CD8-positive, alpha-beta T cell (primary cell): ENCODE measurements at regions of chr16 and their contacts with region 1.

Region 1: DNA sequence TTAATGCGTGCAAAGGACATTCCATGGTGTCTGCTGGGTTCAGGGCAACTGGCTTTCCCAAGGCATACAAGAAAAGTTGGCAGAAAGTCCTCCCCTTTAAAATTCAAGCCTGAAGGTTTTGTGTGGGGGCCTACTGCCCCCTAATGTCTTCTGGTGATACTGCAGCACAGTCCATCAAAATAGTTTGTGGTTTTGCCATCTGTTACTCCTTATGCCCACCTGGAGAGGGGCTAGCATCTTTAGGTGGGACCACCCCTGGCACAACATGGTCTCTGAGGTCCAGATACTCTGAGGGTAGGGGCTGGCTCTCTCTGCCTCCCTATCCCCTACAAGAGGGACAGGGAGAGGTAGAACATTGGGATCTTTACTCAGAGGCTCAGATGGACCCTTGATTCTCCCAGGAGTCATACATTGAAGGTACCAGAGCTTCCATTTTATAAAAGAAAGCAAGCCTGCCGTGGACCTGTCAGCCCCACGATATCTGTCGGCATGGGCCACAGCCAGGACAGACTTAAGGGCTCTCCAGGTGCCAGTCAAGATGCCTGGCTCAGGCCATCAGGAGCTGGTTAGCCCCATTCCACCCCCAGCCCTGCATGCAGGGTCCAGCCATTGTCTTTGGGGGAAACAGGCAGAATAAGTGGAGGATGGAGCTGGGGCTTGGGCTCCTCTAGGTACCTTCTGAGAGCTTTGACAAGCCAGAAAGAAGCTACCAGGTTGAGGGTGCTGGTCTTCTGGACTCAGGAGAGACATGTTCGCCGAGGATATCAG is 6.3 kb downstream of the ESRP2 start:
- DNase-seq: peak in 6 of 9 experiments; percentile 36 to 72 (median 56)
- ATAC-seq: peak; percentile 64
- H3K4me3 ChIP-seq: no peak overlapping the region
- H3K4me3 Mint-ChIP-seq: no peak overlapping the region
- H3K27ac ChIP-seq: no peak overlapping the region
- H3K27ac Mint-ChIP-seq: peak overlapping the region; percentile 53
- H3K4me1 ChIP-seq: peaks cover 20% of the 10 kb centered on the region
- H3K4me1 Mint-ChIP-seq: peaks cover 41% of the 10 kb centered on the region
- H3K27me3 ChIP-seq: no peaks in the 10 kb centered on the region
- H3K27me3 Mint-ChIP-seq: no peaks in the 10 kb centered on the region
- CTCF ChIP-seq: peak; percentile 81

Region 2: DNA sequence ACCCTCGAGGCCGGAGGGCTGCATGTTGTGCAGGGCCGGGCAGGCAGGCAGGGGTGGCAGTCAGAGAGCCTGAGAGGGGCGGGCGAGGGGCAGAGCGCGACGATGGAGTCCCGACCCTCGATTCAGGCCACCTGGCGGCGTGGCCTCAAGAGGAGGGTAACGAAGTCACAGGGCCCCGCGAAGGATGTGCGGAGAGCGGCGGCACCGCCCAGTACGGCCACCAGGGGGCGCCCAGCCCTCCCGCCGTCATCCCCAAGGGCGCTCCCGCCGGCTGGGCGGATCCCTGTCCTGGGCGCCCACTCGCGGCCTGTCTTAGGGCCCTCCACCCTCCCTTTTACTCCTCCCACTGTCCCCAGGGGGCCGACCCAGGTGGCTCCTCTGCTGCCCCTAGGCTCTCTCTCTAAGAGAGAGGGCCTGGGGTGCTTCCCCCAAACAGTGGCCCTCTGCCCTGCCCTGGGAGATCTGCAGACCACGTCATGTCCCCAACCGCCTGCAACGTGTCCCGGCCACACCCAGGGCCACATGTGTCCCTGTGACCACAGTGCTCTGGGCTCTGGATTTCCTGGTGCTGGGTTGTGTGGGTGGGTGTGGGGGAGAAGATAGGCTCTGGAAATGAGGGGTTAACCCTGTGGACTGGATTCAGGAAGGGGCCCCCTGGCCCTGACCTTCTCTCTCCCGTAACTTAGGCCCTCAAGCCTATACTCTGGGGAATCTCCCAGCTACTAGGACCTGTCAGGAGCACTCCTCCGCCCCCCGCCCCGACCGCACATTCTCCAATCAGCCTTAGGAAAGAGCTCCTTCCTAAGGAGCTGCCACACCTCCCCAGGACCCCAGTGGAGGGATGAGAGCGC is 236.2 kb before region 1 on chr16:
- CTCF ChIA-PET with region 1: interaction called, 5 read pairs
- POLR2A ChIA-PET with region 1: no interaction called
- intact Hi-C with region 1: loop called (anchors 1 to 2 kb)
- DNase-seq: peak; percentile 70 to 91 (median 79)
- ATAC-seq: peak; percentile 92
- H3K4me3 ChIP-seq: peak overlapping the region; percentile 38 to 41
- H3K4me3 Mint-ChIP-seq: peak overlapping the region; percentile 83
- H3K27ac ChIP-seq: peak overlapping the region; percentile 52 to 87
- H3K27ac Mint-ChIP-seq: peak overlapping the region; percentile 95
- H3K4me1 ChIP-seq: peaks cover 34% of the 10 kb centered on the region
- H3K4me1 Mint-ChIP-seq: peaks cover 34% of the 10 kb centered on the region
- H3K27me3 ChIP-seq: no peaks in the 10 kb centered on the region
- H3K27me3 Mint-ChIP-seq: no peaks in the 10 kb centered on the region
- CTCF ChIP-seq: peak; percentile 87

Region 3: GRCh38 chr16:68074850-68075555 is 154.6 kb before region 1 on chr16:
- CTCF ChIA-PET with region 1: interaction called, 9 read pairs
- POLR2A ChIA-PET with region 1: no interaction called
- intact Hi-C with region 1: loop called in 1 of 2 experiments (anchors 1 kb)
- DNase-seq: peak in 8 of 9 experiments; percentile 58 to 85 (median 77)
- ATAC-seq: peak; percentile 69
- H3K4me3 ChIP-seq: peak overlapping the region; percentile 1 to 19
- H3K4me3 Mint-ChIP-seq: peak overlapping the region; percentile 76
- H3K27ac ChIP-seq: peak overlapping the region in 1 of 2 experiments; percentile 64
- H3K27ac Mint-ChIP-seq: peak overlapping the region; percentile 92
- H3K4me1 ChIP-seq: peaks cover 92% of the 10 kb centered on the region
- H3K4me1 Mint-ChIP-seq: peaks cover 87% of the 10 kb centered on the region
- H3K27me3 ChIP-seq: no peaks in the 10 kb centered on the region
- H3K27me3 Mint-ChIP-seq: no peaks in the 10 kb centered on the region
- CTCF ChIP-seq: no peak

Region 4: DNA sequence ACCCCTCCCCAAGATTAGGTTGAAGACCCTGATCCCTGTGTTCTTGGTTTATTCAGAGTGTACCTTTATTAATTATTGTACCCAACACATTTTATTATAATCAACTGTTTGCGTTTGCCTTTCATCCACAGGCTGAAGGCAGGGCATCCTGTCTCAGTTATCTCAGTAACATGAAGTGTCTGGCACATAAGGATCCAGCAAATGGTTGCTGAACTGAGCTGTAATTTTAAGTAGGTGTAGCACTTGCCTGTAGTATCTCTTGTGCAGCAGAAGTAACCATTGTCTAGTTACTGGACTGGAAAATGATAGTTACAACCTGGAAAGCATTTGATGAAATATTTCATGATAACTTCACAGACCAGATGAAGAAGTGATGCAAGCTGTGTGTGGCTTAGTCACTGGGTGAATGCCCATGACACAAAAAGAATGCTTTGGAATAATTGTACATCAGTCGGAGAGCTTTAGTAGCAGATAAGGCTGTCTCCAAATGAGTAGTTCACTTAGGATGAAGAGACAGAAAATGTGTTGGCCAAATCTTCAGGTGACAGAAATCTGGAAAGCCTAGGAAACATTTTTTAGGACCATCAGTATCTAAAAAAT is 50.3 kb before region 1 on chr16:
- CTCF ChIA-PET with region 1: interaction called, 3 read pairs
- POLR2A ChIA-PET with region 1: no interaction called
- intact Hi-C with region 1: loop called (anchors 5 to 10 kb)
- DNase-seq: no peak
- ATAC-seq: no peak
- H3K4me3 ChIP-seq: no peak overlapping the region
- H3K4me3 Mint-ChIP-seq: no peak overlapping the region
- H3K27ac ChIP-seq: no peak overlapping the region
- H3K27ac Mint-ChIP-seq: peak overlapping the region; percentile 73
- H3K4me1 ChIP-seq: no peaks in the 10 kb centered on the region
- H3K4me1 Mint-ChIP-seq: peaks cover 11% of the 10 kb centered on the region
- H3K27me3 ChIP-seq: no peaks in the 10 kb centered on the region
- H3K27me3 Mint-ChIP-seq: no peaks in the 10 kb centered on the region
- CTCF ChIP-seq: no peak

Region 5: GRCh38 chr16:68190736-68191510 is 38.7 kb before region 1 on chr16:
- CTCF ChIA-PET with region 1: no interaction called
- POLR2A ChIA-PET with region 1: no interaction called
- intact Hi-C with region 1: loop called in 1 of 2 experiments (anchors 5 kb)
- DNase-seq: no peak
- ATAC-seq: no peak
- H3K4me3 ChIP-seq: no peak overlapping the region
- H3K4me3 Mint-ChIP-seq: no peak overlapping the region
- H3K27ac ChIP-seq: no peak overlapping the region
- H3K27ac Mint-ChIP-seq: no peak overlapping the region
- H3K4me1 ChIP-seq: no peaks in the 10 kb centered on the region
- H3K4me1 Mint-ChIP-seq: peaks cover 15% of the 10 kb centered on the region
- H3K27me3 ChIP-seq: no peaks in the 10 kb centered on the region
- H3K27me3 Mint-ChIP-seq: no peaks in the 10 kb centered on the region
- CTCF ChIP-seq: no peak

Region 6: DNA sequence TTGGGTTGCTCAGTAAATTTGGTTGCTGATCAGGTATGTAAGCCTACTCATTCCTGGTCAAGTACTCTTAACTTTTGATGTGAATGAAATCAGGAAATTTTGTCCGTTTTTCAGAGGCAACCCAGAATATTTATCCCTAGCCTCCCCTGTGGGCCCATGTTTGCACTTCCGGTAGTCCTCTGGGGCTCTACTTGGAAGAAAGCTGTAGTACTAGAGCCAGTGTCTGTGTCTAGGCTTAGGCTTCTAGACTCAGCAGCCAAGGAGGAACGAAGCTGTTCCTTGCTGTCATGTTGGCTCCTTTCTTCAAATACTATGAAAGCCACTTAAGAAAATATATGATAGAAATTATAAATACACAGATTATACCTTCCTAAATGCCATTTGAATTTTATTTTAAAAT is 14.9 kb before region 1 on chr16:
- CTCF ChIA-PET with region 1: interaction called, 6 read pairs
- POLR2A ChIA-PET with region 1: no interaction called
- intact Hi-C with region 1: loop called in 1 of 2 experiments (anchors 2 kb)
- DNase-seq: no peak
- ATAC-seq: no peak
- H3K4me3 ChIP-seq: no peak overlapping the region
- H3K4me3 Mint-ChIP-seq: no peak overlapping the region
- H3K27ac ChIP-seq: no peak overlapping the region
- H3K27ac Mint-ChIP-seq: peak overlapping the region; percentile 87
- H3K4me1 ChIP-seq: peaks cover 24% of the 10 kb centered on the region
- H3K4me1 Mint-ChIP-seq: peaks cover 48% of the 10 kb centered on the region
- H3K27me3 ChIP-seq: no peaks in the 10 kb centered on the region
- H3K27me3 Mint-ChIP-seq: no peaks in the 10 kb centered on the region
- CTCF ChIP-seq: no peak

Region 7: GRCh38 chr16:68345351-68345810 is 115.8 kb after region 1 on chr16:
- CTCF ChIA-PET with region 1: no interaction called
- POLR2A ChIA-PET with region 1: no interaction called
- intact Hi-C with region 1: no loop called
- DNase-seq: peak in 3 of 9 experiments; percentile 27 to 54 (median 51)
- ATAC-seq: peak; percentile 84
- H3K4me3 ChIP-seq: no peak overlapping the region
- H3K4me3 Mint-ChIP-seq: no peak overlapping the region
- H3K27ac ChIP-seq: no peak overlapping the region
- H3K27ac Mint-ChIP-seq: no peak overlapping the region
- H3K4me1 ChIP-seq: peaks cover 11% of the 10 kb centered on the region
- H3K4me1 Mint-ChIP-seq: peaks cover 12% of the 10 kb centered on the region
- H3K27me3 ChIP-seq: no peaks in the 10 kb centered on the region
- H3K27me3 Mint-ChIP-seq: no peaks in the 10 kb centered on the region
- CTCF ChIP-seq: no peak

Region 8: DNA sequence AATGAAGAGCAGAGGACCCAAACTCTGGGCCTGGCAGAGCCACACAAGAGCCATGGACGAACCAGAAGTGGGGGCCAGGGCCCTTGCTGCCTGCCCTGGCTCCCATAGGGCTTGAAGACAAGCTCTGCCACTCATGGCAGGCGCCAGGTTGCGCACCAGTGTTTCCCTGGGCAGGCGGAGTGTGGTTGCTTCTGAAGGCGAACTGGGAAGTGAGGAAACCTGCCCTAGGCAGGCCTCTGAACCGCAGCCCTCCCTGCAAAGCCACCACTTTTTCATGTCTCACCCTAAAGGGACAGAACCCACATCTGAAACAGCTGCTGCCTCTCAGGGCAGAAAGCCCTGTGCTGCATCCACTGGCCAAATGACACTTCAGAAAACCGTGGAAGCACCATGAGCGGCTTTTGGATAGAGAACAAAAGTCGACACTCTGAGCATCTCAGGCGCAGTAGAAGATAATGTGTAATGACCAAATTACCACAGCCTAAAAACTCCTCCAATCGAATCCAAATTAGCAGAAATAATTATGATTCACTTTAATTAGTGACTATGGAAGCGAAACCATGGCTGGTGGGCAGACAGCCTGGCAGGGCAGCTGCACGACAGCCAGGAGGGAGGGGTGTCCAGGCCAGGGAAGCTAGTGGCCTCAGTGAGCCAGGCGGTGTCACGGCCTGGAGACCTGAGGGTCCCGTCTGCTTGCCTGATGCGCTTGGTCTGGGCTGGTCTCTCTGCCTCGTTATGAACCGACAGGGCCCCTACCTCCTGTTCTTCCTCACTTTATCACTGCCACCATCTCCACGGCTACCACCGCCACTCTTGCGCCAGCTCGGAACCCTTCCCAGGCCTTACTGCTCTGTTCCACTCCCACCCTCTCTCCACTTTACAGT is 140.3 kb after region 1 on chr16:
- CTCF ChIA-PET with region 1: no interaction called
- POLR2A ChIA-PET with region 1: no interaction called
- intact Hi-C with region 1: no loop called
- DNase-seq: peak in 4 of 9 experiments; percentile 29 to 62 (median 45)
- ATAC-seq: peak; percentile 30
- H3K4me3 ChIP-seq: no peak overlapping the region
- H3K4me3 Mint-ChIP-seq: peak overlapping the region; percentile 49
- H3K27ac ChIP-seq: no peak overlapping the region
- H3K27ac Mint-ChIP-seq: peak overlapping the region; percentile 32
- H3K4me1 ChIP-seq: peaks cover 56% of the 10 kb centered on the region
- H3K4me1 Mint-ChIP-seq: peaks cover 49% of the 10 kb centered on the region
- H3K27me3 ChIP-seq: no peaks in the 10 kb centered on the region
- H3K27me3 Mint-ChIP-seq: peaks cover 2% of the 10 kb centered on the region
- CTCF ChIP-seq: no peak